Stomach (tissue), 19 donors: ENCODE measurements at regions of chr4 and their contacts with region 1.

Region 1: GRCh38 chr4:86497980-86498862 is 95.9 kb upstream of the PTPN13 start:
- DNase-seq: peak in 1 of 2 donors; percentile 80
- H3K4me3 ChIP-seq: no peak overlapping the region
- H3K27ac ChIP-seq: no peak overlapping the region
- H3K4me1 ChIP-seq: peaks cover 0 to 21% (median 7%) of the 10 kb centered on the region in 4 donors
- H3K27me3 ChIP-seq: no peaks in the 10 kb centered on the region
- CTCF ChIP-seq: peak in 5 of 7 experiments; percentile 35 to 73 (median 61)
- EP300 ChIP-seq: no peak
- POLR2A ChIP-seq: no peak

Region 2: DNA sequence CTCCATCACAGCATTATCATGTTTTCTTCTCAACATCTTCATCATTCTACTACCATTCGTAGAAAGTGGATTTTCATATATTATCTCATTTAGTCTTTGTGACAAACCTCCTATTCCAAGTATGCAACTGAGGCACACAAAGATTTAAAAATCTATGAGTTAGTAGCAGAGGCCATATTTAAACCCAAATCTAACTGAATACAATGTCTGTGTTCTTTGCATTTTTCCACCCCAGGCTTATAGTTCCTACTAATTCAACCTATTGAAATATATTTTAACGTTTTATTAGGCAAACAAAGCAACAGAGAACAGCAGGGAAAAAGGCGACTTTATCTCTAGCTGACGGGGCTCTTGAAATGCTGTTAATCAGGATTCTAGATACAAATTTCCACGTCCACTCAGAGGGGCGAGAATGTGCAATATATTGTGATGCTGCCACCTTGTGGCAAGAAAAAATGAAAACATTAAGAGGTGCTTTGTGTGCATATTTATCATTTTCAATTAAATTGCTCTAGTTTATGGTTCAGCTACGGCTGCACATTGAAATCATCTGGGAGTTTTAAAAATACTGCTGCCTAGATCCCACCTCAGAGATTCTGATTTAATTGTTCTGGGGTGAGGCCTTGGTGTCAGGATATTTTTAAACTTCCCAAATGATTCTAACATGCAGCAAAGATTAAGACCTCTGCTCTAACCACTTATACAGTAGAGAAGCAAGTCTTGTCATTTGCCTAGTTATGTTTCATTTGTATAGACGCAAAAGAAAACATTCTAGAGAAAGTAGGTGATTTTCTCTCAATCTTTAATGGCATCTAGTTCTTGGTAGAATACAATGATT is 454.2 kb before region 1 on chr4:
- intact Hi-C with region 1: no loop called
- DNase-seq: peak in 1 of 2 donors; percentile 81
- H3K4me3 ChIP-seq: no peak overlapping the region
- H3K27ac ChIP-seq: no peak overlapping the region
- H3K4me1 ChIP-seq: peaks cover 0 to 11% (median 3%) of the 10 kb centered on the region in 4 donors
- H3K27me3 ChIP-seq: no peaks in the 10 kb centered on the region
- CTCF ChIP-seq: peak in 5 of 7 experiments; percentile 32 to 72 (median 49)
- EP300 ChIP-seq: no peak
- POLR2A ChIP-seq: no peak

Region 3: DNA sequence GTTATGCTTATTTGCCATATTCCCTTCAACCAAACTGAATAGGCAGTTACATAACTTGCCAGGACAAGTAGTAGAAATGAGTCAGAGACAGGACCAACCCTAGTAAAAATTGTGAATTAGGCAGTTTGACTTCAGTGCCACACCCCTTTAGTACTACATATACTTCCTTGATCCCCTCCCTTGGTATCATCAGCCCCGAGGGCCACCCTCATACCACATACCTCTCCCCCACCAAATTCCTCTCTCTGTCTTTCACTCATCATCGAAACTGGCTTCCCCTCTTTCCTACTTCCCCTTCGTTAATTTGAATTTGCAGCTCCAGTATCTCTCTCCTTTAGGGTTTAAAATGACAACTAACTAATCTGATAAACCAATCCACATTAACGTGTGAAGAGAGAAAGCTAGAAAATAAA is 87.9 kb after region 1 on chr4:
- intact Hi-C with region 1: no loop called
- DNase-seq: peak in 1 of 2 donors; percentile 21
- H3K4me3 ChIP-seq: no peak overlapping the region
- H3K27ac ChIP-seq: no peak overlapping the region
- H3K4me1 ChIP-seq: peaks cover 0 to 22% (median 7%) of the 10 kb centered on the region in 4 donors
- H3K27me3 ChIP-seq: no peaks in the 10 kb centered on the region
- CTCF ChIP-seq: no peak
- EP300 ChIP-seq: no peak
- POLR2A ChIP-seq: no peak

Region 4: DNA sequence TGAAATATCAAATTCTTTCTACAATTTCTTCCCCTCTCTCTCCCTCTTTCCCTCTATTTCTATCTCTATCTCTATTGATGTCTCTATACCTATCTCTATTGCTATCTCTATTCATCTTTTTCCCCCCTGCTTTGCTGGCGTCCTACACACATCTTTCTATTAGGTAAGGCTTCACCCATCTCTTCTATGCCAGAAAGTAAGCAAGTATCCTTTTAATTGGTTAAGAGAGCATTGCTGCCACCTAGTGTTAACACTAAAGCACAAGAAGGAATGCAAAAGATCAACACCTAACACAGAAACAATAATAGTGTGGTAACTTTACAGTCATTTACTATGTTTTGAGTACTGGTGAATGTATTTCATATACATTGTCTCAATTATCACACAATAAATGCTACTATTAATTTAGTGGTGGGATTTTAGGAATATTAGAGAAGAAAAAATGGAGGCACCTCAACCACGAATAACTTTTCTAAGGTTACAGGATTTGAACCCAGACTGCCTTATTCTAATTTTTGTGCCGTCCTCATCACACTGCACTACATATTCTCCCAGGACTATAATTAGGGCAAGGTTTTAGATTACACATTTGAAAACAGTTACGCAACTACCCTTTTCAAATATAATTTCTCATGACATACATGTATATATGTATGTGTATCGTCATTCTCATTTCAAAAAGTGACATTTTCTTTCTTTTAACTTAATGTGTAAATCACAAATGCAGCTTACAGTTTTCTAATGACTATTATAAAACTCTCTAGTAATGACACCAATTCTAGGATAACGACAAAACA is 397.7 kb after region 1 on chr4:
- intact Hi-C with region 1: loop called (anchors 5 kb)
- DNase-seq: peak in 1 of 2 donors; percentile 87
- H3K4me3 ChIP-seq: no peak overlapping the region
- H3K27ac ChIP-seq: no peak overlapping the region
- H3K4me1 ChIP-seq: peaks cover 0 to 23% (median 17%) of the 10 kb centered on the region in 4 donors
- H3K27me3 ChIP-seq: peaks cover 0 to 6% (median 0%) of the 10 kb centered on the region in 3 donors
- CTCF ChIP-seq: peak in 5 of 7 experiments; percentile 58 to 75 (median 72)
- EP300 ChIP-seq: no peak
- POLR2A ChIP-seq: no peak